ENCODE measurements at regions of chr1 and their contacts with region 1.

Region 1: DNA sequence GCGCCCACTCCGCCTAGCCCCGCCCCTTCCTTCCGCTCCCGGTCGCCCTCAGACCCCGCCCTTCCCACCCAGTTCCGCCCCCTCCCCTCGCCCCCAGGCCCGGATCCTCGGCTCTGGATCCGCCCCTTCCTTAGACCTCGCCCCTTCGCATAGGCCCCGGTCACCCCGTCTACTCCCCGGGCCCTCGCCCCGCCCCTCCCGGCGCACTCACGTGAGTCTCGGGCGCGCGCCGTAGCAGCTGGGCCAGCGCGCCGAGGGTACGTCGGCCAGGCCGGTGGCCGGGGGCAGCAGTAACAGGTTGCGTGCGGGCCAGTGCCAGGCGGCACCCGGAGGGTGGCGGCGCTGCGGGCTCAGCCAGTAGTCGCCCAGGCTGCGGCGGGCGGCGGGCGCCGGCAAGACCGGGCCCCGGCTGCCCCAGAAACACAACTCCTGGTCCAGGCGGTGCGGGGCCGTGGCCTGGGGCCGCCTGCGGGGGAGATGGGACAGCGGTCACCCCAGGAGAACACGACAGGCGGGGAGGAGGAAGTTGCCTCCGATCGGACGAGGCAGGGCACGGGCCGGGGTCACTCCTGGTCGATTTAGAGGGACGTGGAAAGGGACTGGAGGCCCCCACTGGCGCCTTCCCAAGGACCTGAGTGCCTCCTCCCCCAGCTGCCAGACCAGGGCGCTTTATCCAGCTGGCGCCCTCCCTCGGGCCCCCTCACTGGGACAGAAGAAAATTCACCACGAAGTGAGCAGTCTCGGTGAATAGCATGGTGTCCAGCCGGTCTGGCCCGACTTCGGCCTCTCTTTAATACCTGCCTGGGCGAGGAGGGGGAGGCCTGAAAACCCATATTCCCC is 10.7 kb downstream of the FAM229A start:
- DNase-seq: peak; percentile 93 to 94
- H3K4me3 ChIP-seq: peak overlapping the region; percentile 59
- H3K4me3 Mint-ChIP-seq: peak overlapping the region; percentile 75
- H3K27ac Mint-ChIP-seq: no peak overlapping the region
- H3K4me1 ChIP-seq: peaks cover 4% of the 10 kb centered on the region; the same call in 1 of the 2 replicates
- H3K4me1 Mint-ChIP-seq: peaks cover 16% of the 10 kb centered on the region
- H3K27me3 ChIP-seq: no peaks in the 10 kb centered on the region
- H3K27me3 Mint-ChIP-seq: no peaks in the 10 kb centered on the region
- CTCF ChIP-seq: peak in 1 of 2 experiments; percentile 18

Region 2: GRCh38 chr1:32215629-32216480 is 135.8 kb before region 1 on chr1:
- CTCF ChIA-PET with region 1: interaction called, 10 read pairs
- POLR2A ChIA-PET with region 1: no interaction called
- intact Hi-C with region 1: loop called (anchors 5 kb)
- DNase-seq: peak; percentile 65 to 70
- H3K4me3 ChIP-seq: no peak overlapping the region
- H3K4me3 Mint-ChIP-seq: no peak overlapping the region
- H3K27ac Mint-ChIP-seq: no peak overlapping the region
- H3K4me1 ChIP-seq: no peaks in the 10 kb centered on the region
- H3K4me1 Mint-ChIP-seq: no peaks in the 10 kb centered on the region
- H3K27me3 ChIP-seq: no peaks in the 10 kb centered on the region
- H3K27me3 Mint-ChIP-seq: no peaks in the 10 kb centered on the region
- CTCF ChIP-seq: peak; percentile 58 to 67

Region 3: GRCh38 chr1:32335790-32336590 is 15.6 kb before region 1 on chr1 and contains the start of gene MARCKSL1:
- CTCF ChIA-PET with region 1: no interaction called
- POLR2A ChIA-PET with region 1: interaction called, 17 read pairs
- intact Hi-C with region 1: no loop called
- DNase-seq: peak; percentile 70 to 84
- H3K4me3 ChIP-seq: peak within 1 kb of the TSS; percentile 79
- H3K4me3 Mint-ChIP-seq: peak within 1 kb of the TSS; percentile 83
- H3K27ac Mint-ChIP-seq: peak within 1 kb of the TSS; percentile 59
- H3K4me1 ChIP-seq: peaks cover 22% of the 10 kb centered on the region
- H3K4me1 Mint-ChIP-seq: peaks cover 21% of the 10 kb centered on the region
- H3K27me3 ChIP-seq: no peaks in the 10 kb centered on the region
- H3K27me3 Mint-ChIP-seq: no peaks in the 10 kb centered on the region
- CTCF ChIP-seq: no peak
- total RNA-seq, gene MARCKSL1: 150 and 159 TPM in 2 replicates

Measured in Caco-2 (cell line).